Activated B cell treated with CpG ODN at 0.5 μM for 24 hours (primary cell): ENCODE measurements at regions of chr7 and their contacts with region 1.

Region 1: DNA sequence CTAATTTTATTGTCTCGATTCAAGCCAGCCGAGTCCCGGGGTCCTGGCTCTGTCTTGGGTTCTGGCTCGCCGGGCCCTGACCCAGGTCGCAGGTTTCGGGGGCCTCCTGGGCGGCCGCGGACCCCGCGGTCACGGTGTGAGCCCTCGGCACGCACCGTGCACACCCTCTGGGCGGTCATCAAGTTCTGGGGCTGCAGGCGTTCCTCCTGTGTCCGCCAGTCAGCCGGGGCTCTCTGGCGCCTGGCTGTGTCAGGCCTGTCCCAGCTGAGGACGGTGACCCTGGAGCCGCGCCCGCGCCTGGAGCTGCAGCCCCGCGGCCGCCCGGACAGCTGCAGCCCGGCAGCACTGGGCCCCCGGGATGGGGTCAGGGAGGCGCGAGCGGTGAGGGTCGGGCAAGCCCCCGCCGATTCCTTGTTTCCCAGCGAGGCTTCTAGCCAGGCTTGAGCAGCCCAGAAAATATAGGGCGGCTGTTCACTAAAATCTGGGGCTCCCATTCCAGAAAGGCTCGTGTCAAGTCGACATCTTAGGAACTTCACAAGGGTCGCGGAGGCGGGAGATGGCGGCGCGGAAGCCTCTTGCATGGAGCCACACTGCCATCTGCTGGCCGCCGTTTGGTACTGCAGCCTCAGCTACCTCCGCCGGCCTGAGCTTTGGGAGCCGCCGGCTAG is 4.2 kb upstream of the HOXA7 start:
- DNase-seq: peak; percentile 83
- ATAC-seq: peak; percentile 87
- H3K4me3 Mint-ChIP-seq: peak overlapping the region; percentile 75
- H3K27ac Mint-ChIP-seq: no peak overlapping the region
- H3K4me1 Mint-ChIP-seq: peaks cover 31% of the 10 kb centered on the region
- H3K27me3 Mint-ChIP-seq: peaks cover 72% of the 10 kb centered on the region
- CTCF ChIP-seq: peak; percentile 97

Region 2: DNA sequence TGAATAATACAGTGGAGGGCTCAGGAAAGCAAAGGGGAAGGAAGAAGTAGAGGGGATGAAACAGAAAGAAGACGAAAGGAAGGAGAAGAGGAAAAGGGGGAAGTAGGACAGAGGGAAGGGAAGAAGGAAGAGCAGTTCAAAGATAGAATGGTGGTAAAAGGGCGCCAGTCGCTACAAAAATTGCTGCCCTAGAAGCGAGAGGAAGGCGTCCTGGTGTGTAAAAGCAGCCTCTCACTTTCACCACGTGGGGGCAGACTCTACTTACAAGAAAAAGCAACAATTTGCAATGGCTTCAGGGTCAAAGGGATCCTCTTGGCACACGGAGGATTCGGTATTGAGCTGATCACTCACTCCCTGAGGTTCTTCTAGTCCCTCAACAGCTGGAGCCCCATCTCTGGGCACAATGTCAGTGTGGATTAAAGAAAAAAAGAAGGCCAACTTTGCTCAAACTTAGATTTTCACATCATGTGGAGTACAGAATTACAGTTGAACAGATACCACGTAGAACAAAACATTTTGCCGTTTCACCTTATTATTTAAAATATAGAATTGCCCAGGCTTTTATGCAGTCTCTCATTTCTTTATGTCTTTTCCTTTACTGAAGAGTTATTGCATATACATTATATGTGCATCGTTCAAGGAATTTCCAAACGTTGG is 1901.0 kb before region 1 on chr7:
- CTCF ChIA-PET with region 1: no interaction called
- POLR2A ChIA-PET with region 1: no interaction called
- intact Hi-C with region 1: loop called (anchors 2 kb)
- DNase-seq: no peak
- ATAC-seq: peak; percentile 64
- H3K4me3 Mint-ChIP-seq: no peak overlapping the region
- H3K27ac Mint-ChIP-seq: no peak overlapping the region
- H3K4me1 Mint-ChIP-seq: peaks cover 9% of the 10 kb centered on the region
- H3K27me3 Mint-ChIP-seq: peaks cover 37% of the 10 kb centered on the region
- CTCF ChIP-seq: peak; percentile 62

Region 3: DNA sequence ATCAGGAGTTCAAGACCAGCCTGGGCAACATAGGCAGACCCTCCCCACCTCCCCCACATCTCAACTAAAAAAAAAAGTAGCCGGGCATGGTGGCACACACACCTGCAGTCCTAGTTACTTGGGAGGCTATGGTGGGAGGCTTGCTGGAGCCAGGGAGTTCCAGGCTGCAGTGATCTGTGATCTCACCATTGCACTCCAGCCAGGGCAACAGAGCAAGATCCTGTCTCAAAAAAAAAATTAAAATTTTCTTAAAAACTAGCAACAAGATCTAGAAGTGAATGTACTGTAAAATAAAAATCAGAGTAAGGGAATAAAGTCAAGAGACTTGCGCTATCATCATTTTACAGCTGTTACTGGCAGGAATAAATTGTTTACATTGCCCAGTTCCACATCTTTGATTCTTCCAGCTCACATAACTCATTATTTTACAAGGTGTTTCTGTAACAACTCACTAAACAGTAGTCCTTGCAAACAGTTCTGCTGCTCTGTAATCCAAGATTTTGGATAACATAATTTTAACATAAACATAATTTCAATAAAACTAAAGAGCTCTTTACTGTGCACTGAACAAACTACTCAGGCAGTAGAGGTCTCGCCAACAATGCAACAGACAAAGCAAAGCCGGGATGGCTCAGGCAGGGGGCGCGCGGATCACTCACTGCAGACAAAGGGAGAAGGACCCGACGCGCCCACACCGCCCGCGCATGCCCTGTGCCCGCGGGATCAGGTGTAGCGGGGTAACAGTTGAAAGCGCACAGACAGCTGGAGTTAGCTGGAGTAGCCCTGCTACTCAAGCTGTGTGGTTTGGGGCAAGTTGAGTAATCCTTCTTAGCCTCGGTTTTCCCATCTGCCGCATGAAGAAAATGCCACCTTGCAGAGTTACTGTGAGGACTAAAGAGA is 1082.0 kb before region 1 on chr7:
- CTCF ChIA-PET with region 1: no interaction called
- POLR2A ChIA-PET with region 1: no interaction called
- intact Hi-C with region 1: loop called (anchors 2 kb)
- DNase-seq: peak; percentile 73
- ATAC-seq: peak; percentile 100
- H3K4me3 Mint-ChIP-seq: no peak overlapping the region
- H3K27ac Mint-ChIP-seq: no peak overlapping the region
- H3K4me1 Mint-ChIP-seq: peaks cover 7% of the 10 kb centered on the region
- H3K27me3 Mint-ChIP-seq: peaks cover 33% of the 10 kb centered on the region
- CTCF ChIP-seq: no peak

Region 4: GRCh38 chr7:26291699-26292538 is 868.8 kb before region 1 on chr7 and contains the start of gene SNX10:
- CTCF ChIA-PET with region 1: no interaction called
- POLR2A ChIA-PET with region 1: no interaction called
- intact Hi-C with region 1: loop called (anchors 5 kb)
- DNase-seq: peak; percentile 76
- ATAC-seq: peak; percentile 77
- H3K4me3 Mint-ChIP-seq: peak within 1 kb of the TSS; percentile 92
- H3K27ac Mint-ChIP-seq: peak within 1 kb of the TSS; percentile 95
- H3K4me1 Mint-ChIP-seq: peaks cover 51% of the 10 kb centered on the region
- H3K27me3 Mint-ChIP-seq: no peaks in the 10 kb centered on the region
- CTCF ChIP-seq: no peak
- total RNA-seq, gene SNX10: 28.9 and 32.3 TPM in 2 replicates

Region 5: GRCh38 chr7:26667500-26668133 is 493.1 kb before region 1 on chr7:
- CTCF ChIA-PET with region 1: no interaction called
- POLR2A ChIA-PET with region 1: no interaction called
- intact Hi-C with region 1: loop called (anchors 5 kb)
- DNase-seq: no peak
- ATAC-seq: peak; percentile 60
- H3K4me3 Mint-ChIP-seq: no peak overlapping the region
- H3K27ac Mint-ChIP-seq: no peak overlapping the region
- H3K4me1 Mint-ChIP-seq: peaks cover 18% of the 10 kb centered on the region
- H3K27me3 Mint-ChIP-seq: no peaks in the 10 kb centered on the region
- CTCF ChIP-seq: no peak

Region 6: DNA sequence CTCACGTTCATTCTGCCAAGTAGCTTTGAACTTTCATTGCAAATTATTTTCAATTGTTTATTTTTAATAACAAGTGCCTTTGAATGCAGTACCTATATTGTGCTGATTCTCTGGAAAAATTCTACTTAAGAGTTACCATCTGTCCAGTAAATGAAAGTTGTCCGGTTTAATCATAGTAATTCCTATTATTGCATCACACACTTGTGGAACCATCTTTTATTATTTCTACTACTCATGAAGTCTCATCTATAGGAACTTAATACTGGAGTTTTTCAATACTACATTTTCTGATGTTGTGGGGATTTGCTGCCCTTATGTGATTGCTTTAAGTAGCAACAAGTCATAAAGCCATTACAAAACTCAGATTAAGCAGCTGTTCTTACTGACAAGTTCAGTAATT is 279.8 kb before region 1 on chr7:
- CTCF ChIA-PET with region 1: no interaction called
- POLR2A ChIA-PET with region 1: no interaction called
- intact Hi-C with region 1: no loop called
- DNase-seq: no peak
- ATAC-seq: no peak
- H3K4me3 Mint-ChIP-seq: no peak overlapping the region
- H3K27ac Mint-ChIP-seq: no peak overlapping the region
- H3K4me1 Mint-ChIP-seq: no peaks in the 10 kb centered on the region
- H3K27me3 Mint-ChIP-seq: peaks cover 3% of the 10 kb centered on the region
- CTCF ChIP-seq: no peak

Region 7: DNA sequence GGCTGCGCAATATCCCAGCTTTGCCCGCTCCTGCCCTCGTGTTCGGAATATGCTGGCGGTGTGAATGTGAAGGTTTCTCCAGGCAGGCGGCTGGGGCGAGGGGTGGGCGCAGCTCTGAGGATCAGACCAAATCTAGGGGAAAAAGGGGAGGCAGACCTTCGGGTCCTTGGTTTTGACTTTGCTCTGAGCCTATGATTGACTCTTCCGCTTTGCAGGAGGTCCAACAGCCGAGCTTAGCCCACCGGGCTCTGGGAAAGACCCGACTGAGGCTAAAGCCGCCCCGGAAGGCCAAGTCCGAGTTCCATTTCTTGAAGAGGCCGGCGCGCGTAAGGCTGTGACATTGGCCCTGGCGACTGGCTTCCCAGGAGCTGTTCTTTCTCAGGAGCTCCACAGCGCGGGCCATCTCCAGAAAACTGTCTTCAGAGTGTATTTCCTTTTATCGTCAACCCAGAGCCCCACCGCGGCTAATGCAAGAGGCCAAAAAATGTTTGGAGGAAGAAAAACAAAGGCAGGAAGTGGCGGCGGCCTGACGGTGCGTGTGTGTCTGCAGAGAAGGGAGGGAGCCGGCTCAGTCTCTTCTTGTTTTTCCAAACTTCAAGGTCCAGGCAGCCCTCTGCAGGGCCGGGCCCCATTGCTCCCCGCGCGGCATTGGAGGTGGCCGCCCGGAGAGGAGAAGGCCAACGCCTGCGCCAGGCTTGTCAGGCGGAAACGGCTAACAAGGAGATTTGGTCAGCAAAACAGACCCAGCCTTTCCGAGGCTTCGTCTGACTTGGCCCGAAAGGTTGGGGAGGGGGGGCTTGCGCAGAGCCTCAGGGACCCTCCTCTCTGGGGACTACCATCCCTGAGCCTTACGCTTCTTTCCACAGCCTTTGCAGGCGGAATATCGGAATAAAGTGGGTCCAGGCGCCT is 28.0 kb after region 1 on chr7:
- CTCF ChIA-PET with region 1: interaction called, 6 read pairs
- POLR2A ChIA-PET with region 1: interaction called, 3 read pairs
- intact Hi-C with region 1: loop called (anchors 1 kb)
- DNase-seq: peak; percentile 36
- ATAC-seq: no peak
- H3K4me3 Mint-ChIP-seq: peak overlapping the region; percentile 69
- H3K27ac Mint-ChIP-seq: no peak overlapping the region
- H3K4me1 Mint-ChIP-seq: peaks cover 54% of the 10 kb centered on the region
- H3K27me3 Mint-ChIP-seq: peaks cover 76% of the 10 kb centered on the region
- CTCF ChIP-seq: no peak